ENCODE measurements at regions of chr6 and their contacts with region 1.

Region 1: DNA sequence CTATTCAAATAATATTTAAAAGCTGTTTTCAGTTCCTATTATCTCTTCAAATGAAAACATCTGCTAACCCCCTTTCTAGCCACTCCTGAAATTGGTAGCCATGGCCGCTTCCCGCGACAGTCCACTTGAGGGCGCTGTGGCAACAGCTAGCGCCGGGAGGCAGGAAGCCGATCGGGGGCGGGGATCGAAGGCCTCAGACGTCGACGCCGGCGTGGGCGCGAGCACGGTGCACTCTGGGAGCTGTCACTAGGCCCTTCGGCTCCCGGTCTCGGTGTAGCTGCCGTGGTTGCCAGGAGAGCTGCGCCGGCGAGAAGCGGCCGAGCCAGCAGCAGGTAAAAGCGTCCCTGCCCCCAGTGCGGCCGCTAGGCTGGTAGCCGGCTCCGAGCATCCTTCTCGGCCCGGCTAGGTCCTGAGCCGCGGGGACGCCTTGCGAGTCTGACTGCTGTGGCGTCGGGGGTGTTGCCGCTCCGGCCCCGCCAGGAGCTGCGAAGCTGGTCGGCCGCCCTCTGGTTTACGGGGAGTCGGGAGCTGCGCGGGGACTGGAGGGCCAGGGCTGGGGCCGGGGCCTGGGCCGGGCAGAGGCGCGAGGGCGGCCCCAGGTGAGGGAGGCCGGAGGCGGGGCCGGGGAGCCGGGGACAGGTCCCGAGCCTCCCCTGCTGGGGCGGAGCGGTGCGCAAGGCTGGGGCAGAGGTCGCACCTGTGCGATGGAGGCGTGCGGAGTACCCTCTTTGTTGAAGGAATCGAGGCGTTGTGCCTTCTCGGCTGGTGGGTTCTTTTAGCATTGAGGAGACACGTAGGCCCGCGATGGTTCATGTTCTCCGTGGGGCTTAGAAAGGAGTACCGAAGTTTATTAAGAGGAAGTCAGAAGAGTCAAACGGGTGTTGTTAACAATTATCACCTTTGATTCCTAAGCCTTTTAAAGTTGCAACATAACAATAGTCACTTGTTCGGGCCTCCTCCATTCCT is at the start of gene DOP1A:
- DNase-seq: peak; percentile 98
- ATAC-seq: peak; percentile 96 to 97
- total RNA-seq, gene DOP1A: 11.8 to 14.3 TPM

Region 2: GRCh38 chr6:82247634-82248232 is 820.0 kb before region 1 on chr6 and contains the start of gene IBTK:
- intact Hi-C with region 1: loop called in 1 of 2 experiments (anchors 5 kb)
- DNase-seq: peak; percentile 95
- ATAC-seq: peak; percentile 98 to 99
- total RNA-seq, gene IBTK: 22.3 to 31.8 TPM

Region 3: DNA sequence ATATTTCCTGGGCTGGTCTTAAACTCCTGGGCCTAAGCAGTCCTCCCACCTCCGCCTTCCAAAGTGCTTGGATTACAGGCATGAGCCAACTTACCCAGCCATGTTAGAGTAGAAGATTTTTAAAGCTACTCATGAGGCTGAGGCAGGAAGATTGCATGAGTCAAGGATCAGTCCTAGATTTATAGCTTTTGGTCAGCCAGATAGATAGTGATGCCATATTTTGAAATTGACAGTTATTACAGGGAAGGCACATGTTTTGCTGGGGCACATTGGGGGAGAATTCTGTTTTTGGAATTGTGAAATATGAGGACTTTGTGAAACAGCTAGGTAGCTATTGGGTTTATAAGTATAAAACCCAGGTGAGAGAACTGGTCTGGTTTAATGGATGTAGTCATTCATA is 40.6 kb after region 1 on chr6:
- intact Hi-C with region 1: no loop called
- DNase-seq: no peak
- ATAC-seq: no peak

Region 4: DNA sequence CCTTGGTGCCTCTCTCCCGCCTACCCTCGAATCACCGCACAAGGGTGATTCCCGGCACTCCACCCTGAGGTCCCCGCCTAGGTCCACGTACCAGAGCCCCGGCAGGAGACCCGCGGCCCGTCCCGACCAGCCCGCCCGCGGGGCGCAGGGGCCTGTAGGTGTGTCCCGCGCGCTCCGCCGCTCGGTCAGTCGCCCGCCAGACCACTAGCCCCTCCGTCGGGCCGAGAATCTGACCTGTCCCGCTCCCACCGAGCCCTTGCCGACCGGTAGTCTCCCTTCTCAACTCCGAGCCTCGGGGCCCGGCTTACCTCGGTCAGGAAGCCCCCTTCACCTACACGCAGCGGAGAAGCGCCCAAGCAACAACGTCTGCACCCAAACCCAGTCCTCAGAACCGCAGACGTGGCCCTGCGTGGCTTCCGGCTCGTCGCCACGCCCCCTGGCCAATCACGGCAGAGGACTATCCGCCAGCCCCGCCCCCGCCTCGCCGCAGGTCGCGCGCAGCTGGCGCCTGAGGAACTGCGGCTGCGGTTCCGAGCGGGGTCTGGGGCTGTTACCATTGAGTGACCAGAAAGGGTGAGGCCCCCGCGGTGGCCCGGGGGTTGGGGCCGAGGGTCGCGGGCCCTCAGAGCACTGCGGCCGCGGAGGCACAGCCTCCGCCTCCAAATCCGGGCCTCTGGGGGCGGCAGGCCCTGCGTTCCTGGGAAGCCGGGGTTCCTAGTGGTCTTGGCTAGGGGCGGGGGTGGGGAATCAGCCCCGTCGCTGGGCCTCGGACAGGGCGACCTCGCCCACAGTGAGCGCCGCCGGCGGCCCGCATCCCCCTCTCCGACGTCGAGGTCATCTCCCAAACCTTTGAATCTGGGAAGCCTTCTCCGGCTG is 125.4 kb after region 1 on chr6 and contains the starts of genes PGM3 and RWDD2A:
- intact Hi-C with region 1: loop called in 1 of 2 experiments (anchors 5 kb)
- DNase-seq: peak; percentile 94
- ATAC-seq: peak; percentile 99
- total RNA-seq, gene PGM3: 18.4 to 31.2 TPM
- total RNA-seq, gene RWDD2A: 3.9 to 5.2 TPM

Region 5: DNA sequence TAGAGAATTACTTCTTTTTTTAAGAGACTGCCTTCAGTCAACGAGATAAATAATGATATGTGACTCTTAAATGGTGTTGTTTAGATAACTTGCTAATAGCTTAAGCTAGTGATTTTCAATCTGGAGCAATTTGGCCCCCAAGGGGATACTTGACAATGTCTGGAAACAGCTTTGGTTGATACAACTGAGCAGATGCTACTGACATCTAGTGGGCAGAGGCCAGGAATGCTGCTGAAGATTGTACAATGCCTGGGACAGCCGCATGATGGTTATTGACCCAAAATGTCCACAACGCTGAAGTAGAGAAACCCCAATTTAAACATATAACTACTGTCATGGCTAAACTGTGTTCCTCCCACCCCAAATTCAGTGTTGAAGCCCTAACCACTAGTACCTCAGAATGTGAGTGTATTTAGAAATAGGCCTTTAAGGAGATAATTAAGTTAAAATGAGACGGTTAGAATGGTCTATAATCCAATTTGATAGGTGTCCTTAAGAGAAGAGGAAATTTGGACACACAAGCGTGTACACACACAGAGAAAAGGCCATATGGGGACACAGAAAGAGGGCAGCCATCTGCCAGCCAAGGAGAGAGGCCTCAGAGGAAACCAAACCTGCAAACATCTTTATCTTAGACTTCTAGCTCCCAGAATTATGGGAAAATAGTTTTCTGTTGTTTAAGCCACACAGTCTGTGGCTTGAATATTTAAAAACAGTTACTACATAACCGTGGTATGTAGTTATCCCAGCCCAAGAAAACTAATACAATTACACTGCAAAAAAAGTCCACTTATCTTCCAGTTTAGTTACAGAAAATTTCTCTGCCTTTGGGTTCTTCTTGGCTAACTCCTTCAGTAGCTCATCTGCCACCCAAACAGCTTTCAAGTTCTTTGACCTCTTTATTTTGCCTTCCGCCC is 147.7 kb after region 1 on chr6:
- intact Hi-C with region 1: loop called (anchors 2 to 10 kb)
- DNase-seq: peak; percentile 66
- ATAC-seq: peak; percentile 94 to 95

Region 6: DNA sequence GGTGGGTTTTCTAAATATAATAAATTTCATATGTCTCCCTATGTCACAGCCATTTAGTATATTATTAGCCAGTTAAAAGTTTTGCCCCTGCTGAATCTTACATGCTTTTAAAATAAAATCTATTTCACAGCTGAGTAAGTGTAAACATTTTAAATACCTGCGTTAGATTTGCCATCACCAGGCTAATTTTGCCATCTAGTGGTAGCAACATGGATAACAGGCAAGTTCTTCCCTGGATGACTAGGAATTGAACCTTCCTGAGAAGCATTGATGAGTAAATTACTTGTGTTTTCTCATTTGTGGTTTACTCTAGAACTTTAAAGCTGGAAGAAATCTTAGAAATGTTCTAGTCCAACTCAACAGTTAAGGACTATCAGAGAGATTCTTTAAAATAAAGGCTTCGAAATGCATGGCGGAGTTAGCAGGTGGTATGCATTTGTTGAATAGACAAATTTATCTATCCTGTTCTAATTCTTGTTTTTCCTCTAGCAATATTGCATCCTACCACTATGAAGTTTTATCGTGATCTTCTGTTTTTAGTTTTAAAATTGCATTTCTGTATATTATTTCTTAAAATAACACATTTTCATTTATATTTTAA is 447.2 kb after region 1 on chr6:
- intact Hi-C with region 1: loop called in 1 of 2 experiments (anchors 10 kb)
- DNase-seq: no peak
- ATAC-seq: no peak

Region 7: GRCh38 chr6:84182001-84182400 is 1114.3 kb after region 1 on chr6:
- intact Hi-C with region 1: no loop called
- DNase-seq: no peak
- ATAC-seq: no peak